ENCODE measurements at regions of chr17 and their contacts with region 1.

Region 1: DNA sequence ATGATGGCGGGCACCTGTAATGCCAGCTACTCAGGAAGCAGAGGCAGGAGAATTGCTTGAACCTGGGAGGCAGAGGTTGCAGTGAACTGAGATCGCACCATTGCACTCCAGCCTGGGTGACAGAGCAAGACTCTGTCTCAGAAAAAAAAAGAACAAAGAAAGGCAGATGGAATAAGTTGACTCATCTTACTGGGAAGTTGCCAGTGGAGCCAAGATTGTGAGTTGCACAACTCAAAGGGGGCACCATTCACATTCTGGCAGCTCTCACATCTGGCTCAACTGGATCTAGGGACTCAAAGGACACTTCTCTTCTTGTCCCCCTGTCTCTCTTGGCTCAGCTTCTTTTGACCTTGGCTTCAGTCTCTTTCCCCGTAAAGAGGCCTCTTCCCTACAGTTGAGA is 53.7 kb upstream of the ETV4 start:
- DNase-seq: no peak
- ATAC-seq: no peak

Region 2: DNA sequence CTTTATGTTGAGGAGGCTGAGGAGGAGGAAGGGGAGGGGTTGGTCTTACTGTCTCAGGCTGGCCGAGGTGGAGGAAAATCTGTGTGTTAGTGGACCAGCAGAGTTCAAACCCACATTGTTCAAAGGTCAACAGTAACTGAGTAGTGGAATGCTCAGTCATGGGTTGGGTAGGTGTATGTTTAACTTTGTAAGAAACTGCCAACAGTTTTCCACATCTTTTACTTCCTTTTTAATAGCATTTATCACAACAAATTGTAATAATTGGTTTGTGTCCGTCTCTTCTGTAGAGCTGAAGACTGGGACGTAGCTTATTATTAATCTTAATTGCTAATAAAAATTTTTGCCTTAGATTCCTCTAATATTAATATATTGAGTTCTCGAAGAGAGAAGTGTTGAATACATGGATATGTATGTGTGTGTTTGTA is 1135.8 kb before region 1 on chr17:
- intact Hi-C with region 1: no loop called
- DNase-seq: no peak
- ATAC-seq: no peak

Region 3: GRCh38 chr17:43634591-43635125 is 34.8 kb after region 1 on chr17:
- intact Hi-C with region 1: loop called (anchors 5 kb)
- DNase-seq: no peak
- ATAC-seq: peak; percentile 64

Region 4: DNA sequence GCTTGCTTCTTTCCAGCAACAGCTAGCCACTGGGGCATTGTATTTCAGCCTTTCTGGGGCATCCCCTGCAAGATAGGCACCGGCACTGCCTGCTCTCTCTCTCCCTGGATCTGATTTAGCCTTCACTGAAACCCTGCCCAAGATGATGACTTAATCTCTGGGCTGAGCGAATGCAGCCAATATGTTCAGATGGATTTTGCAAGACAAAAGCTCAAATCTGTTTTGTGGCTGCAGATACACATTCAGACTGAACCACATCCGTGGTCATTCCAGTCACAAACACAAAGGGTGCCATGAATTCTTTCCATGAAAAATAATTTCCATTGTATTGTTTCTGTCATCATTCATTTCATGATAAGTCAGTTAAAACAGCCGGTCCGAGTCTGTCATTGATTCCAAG is 134.5 kb after region 1 on chr17:
- intact Hi-C with region 1: no loop called
- DNase-seq: no peak
- ATAC-seq: peak; percentile 57

Measured in Right ventricle myocardium inferior (tissue), 1 donor.